ENCODE measurements at regions of chr1 and their contacts with region 1.

Region 1: GRCh38 chr1:159161001-159161718 is 10.3 kb upstream of the CADM3 start:
- DNase-seq: peak; percentile 55 to 72 (median 69)
- H3K4me3 ChIP-seq: no peak overlapping the region
- H3K4me3 Mint-ChIP-seq: no peak overlapping the region
- H3K27ac ChIP-seq: no peak overlapping the region
- H3K27ac Mint-ChIP-seq: no peak overlapping the region
- H3K4me1 ChIP-seq: peaks cover 0 to 3% of the 10 kb centered on the region in 2 donors
- H3K4me1 Mint-ChIP-seq: peaks cover 10% of the 10 kb centered on the region
- H3K27me3 ChIP-seq: peaks cover 12 to 25% of the 10 kb centered on the region in 2 donors
- H3K27me3 Mint-ChIP-seq: peaks cover 6 to 24% (median 12%) of the 10 kb centered on the region in 3 donors
- CTCF ChIP-seq: peak; percentile 98

Region 2: GRCh38 chr1:158819461-158820443 is 341.4 kb before region 1 on chr1:
- intact Hi-C with region 1: no loop called
- DNase-seq: peak; percentile 25 to 59 (median 44)
- H3K4me3 ChIP-seq: peak overlapping the region in 1 of 3 experiments; percentile 41
- H3K4me3 Mint-ChIP-seq: peak overlapping the region in 1 of 2 donors; percentile 82
- H3K27ac ChIP-seq: peak overlapping the region; percentile 50 to 83
- H3K27ac Mint-ChIP-seq: peak overlapping the region; percentile 84 to 95 (median 92)
- H3K4me1 ChIP-seq: peaks cover 48 to 52% of the 10 kb centered on the region in 2 donors
- H3K4me1 Mint-ChIP-seq: peaks cover 67% of the 10 kb centered on the region
- H3K27me3 ChIP-seq: no peaks in the 10 kb centered on the region
- H3K27me3 Mint-ChIP-seq: no peaks in the 10 kb centered on the region
- CTCF ChIP-seq: no peak

Region 3: GRCh38 chr1:159197561-159198557 is 36.7 kb after region 1 on chr1:
- intact Hi-C with region 1: loop called (anchors 5 kb)
- DNase-seq: peak; percentile 48 to 70 (median 61)
- H3K4me3 ChIP-seq: no peak overlapping the region
- H3K4me3 Mint-ChIP-seq: no peak overlapping the region
- H3K27ac ChIP-seq: no peak overlapping the region
- H3K27ac Mint-ChIP-seq: no peak overlapping the region
- H3K4me1 ChIP-seq: peaks cover 16 to 19% of the 10 kb centered on the region in 2 donors
- H3K4me1 Mint-ChIP-seq: peaks cover 29% of the 10 kb centered on the region
- H3K27me3 ChIP-seq: no peaks in the 10 kb centered on the region
- H3K27me3 Mint-ChIP-seq: peaks cover 7 to 12% (median 10%) of the 10 kb centered on the region in 3 donors
- CTCF ChIP-seq: peak; percentile 91

Region 4: DNA sequence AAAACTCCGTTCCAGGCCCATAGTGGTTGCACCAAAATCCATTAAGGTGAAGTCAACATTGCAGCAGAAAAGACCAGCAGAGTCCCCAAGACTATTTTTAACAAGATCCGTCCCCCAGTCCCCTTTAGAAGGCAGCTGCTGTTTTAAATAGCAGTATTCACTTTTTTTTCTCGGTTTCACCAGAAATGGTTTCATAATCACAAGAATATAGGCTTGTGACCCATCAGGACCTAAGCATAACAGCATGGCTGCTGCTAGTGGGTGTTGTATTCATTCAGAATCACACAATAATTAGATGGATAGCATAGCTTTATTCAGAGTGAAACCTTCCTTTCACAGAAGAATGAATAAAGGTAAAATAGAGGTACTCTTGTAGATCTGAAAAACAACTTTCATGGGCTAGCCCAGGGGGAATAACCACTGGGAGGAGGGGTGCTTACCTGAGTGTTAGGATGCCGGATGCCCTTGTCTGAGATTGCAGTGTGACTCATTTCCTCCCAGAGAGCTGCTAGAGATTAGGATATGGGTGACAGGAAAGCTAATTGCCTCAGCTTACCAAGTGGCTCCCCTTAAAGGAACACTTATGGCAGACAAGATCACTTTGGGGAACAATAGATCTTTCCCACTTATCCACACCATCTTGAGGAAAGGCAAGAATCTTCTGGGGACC is 78.5 kb after region 1 on chr1:
- intact Hi-C with region 1: no loop called
- DNase-seq: no peak
- H3K4me3 ChIP-seq: no peak overlapping the region
- H3K4me3 Mint-ChIP-seq: no peak overlapping the region
- H3K27ac ChIP-seq: no peak overlapping the region
- H3K27ac Mint-ChIP-seq: peak overlapping the region in 1 of 7 donors; percentile 12
- H3K4me1 ChIP-seq: no peaks in the 10 kb centered on the region
- H3K4me1 Mint-ChIP-seq: peaks cover 4% of the 10 kb centered on the region
- H3K27me3 ChIP-seq: no peaks in the 10 kb centered on the region
- H3K27me3 Mint-ChIP-seq: no peaks in the 10 kb centered on the region
- CTCF ChIP-seq: no peak

Measured in CD14-positive monocyte (primary cell).